Prostate gland (tissue), 2 donors: ENCODE measurements at regions of chr5 and their contacts with region 1.

Region 1: DNA sequence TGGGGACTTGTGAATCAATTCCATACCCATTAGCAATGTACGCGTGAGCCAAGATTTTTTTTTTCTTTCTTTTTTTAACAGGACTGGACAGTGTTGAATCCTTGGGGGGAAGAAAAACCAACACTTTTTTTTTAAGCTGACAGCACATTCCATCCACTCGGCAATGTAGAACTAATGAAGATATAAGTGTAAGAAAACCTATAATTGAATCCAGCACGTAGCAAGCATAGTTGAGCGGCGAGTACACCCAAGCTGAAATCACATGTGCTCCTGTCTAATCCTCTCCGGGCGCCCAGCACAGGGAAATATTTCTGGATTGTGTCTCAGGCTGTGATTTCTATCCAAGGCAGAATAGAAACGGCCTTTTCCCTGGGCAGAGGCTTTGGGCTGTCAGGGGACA is 118.2 kb downstream of the BOD1 start:
- DNase-seq: no peak
- H3K4me3 ChIP-seq: no peak overlapping the region
- H3K27ac ChIP-seq: no peak overlapping the region
- H3K4me1 ChIP-seq: no peaks in the 10 kb centered on the region
- H3K27me3 ChIP-seq: no peaks in the 10 kb centered on the region
- CTCF ChIP-seq: no peak
- POLR2A ChIP-seq: no peak

Region 2: DNA sequence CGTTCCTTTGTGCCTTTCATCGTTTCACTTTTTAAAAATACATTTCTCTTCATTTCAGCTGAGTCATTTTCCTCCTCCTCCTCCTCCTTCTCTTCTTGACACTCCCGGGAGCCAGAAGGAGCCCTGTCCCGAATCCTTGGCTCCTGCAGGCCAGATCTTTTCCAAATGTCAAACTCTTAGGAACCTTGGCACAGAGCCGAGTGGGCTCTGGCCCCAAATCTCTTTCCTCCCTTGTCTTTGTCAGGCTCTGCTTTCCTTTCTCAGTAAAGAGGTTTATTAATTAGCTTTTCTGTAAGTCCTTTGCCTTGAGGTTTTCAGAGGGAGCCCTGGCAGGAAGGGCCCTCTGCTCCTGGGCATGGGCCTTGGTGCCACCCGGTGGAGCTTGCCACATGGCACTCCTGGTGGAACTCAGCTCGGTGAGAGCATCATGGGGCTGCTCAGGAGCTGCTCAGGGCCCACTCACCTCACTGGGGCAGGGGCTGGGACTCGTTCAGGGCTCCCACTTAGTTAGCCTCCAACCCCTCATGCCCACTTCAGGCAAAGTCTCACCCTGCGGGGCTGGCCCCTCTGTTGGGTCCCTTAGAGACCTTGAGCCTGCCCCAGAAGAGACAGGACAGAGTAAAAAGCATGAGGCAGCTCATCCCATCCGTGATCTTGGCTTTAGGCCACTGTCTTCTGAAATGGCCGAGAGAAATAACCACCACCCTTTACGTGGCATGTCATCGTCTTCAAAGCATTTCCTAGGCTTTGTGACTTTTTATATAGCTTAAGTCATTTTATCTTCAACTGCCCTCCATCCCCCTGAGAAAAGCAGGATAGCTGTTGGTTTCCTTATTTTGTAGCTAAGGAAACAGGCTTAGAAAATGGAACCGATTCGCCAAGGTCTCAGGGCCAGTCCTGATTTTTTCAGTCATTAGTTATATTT is 187.2 kb before region 1 on chr5:
- intact Hi-C with region 1: no loop called
- DNase-seq: no peak
- H3K4me3 ChIP-seq: no peak overlapping the region
- H3K27ac ChIP-seq: peak overlapping the region; percentile 5 to 28
- H3K4me1 ChIP-seq: no peaks in the 10 kb centered on the region
- H3K27me3 ChIP-seq: no peaks in the 10 kb centered on the region
- CTCF ChIP-seq: no peak
- POLR2A ChIP-seq: no peak

Region 3: GRCh38 chr5:173324115-173325001 is 173.9 kb before region 1 on chr5:
- intact Hi-C with region 1: loop called (anchors 5 kb)
- DNase-seq: no peak
- H3K4me3 ChIP-seq: no peak overlapping the region
- H3K27ac ChIP-seq: peak overlapping the region in 1 of 2 donors; percentile 29
- H3K4me1 ChIP-seq: peaks cover 10% of the 10 kb centered on the region
- H3K27me3 ChIP-seq: peaks cover 17% of the 10 kb centered on the region
- CTCF ChIP-seq: no peak
- POLR2A ChIP-seq: no peak

Region 4: GRCh38 chr5:173412566-173412965 is 85.7 kb before region 1 on chr5:
- intact Hi-C with region 1: loop called (anchors 5 kb)
- DNase-seq: no peak
- H3K4me3 ChIP-seq: no peak overlapping the region
- H3K27ac ChIP-seq: no peak overlapping the region
- H3K4me1 ChIP-seq: no peaks in the 10 kb centered on the region
- H3K27me3 ChIP-seq: no peaks in the 10 kb centered on the region
- CTCF ChIP-seq: no peak
- POLR2A ChIP-seq: no peak

Region 5: GRCh38 chr5:173472141-173472543 is 26.1 kb before region 1 on chr5:
- intact Hi-C with region 1: loop called (anchors 2 kb)
- DNase-seq: peak; percentile 91
- H3K4me3 ChIP-seq: no peak overlapping the region
- H3K27ac ChIP-seq: peak overlapping the region; percentile 65 to 83
- H3K4me1 ChIP-seq: peaks cover 13% of the 10 kb centered on the region
- H3K27me3 ChIP-seq: no peaks in the 10 kb centered on the region
- CTCF ChIP-seq: no peak
- POLR2A ChIP-seq: no peak